Activated naive CD8-positive, alpha-beta T cell treated with anti-CD3 and anti-CD28 coated beads, Interleukin-2, amount 10 ng/mL, durations not matched to agents 7 days and 5 days (primary cell): ENCODE measurements at regions of chr6 and their contacts with region 1.

Region 1: DNA sequence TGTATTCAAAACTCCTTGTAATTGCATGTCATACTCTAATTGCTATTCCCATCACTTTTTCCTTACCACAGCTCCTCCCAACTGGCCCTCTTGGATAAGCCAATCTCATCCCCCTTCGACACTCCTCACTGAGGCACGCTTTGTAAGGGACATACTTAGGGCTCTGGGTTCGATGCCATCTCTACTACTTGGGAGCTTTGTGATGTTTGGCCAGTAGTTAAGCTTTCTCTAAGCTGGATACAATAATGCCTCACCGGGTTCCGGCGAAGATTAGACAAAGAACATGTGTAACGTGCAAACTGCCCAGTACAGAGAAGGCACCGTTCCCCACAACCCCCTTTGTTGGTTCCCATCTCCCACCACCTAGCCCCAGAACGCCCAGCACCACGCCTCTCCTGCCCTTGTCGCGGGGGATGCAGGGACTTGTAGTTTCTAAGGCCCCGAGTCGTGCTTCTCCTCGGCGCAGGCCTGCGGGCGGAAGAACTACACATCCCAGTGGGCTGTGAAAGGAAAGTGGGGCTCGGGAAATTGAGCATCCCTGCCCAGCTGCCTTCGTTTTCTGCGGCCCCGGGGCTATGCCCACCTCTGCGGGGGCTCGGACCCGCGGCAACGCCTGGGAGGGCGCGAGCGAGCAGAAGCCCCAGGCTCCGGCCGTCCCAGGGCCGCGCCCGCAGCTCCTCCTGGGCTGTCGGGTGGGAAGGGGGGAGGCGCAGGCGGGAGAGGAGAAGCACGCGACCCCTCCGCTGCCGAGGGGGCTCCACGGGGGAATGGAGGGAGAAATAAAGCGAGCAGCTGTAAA is 1.1 kb upstream of the ZDHHC14 start:
- DNase-seq: peak; percentile 83
- ATAC-seq: peak; percentile 70
- H3K4me3 Mint-ChIP-seq: peak overlapping the region; percentile 80
- H3K27ac Mint-ChIP-seq: peak overlapping the region; percentile 76
- H3K4me1 Mint-ChIP-seq: peaks cover 23% of the 10 kb centered on the region
- H3K27me3 Mint-ChIP-seq: peaks cover 8% of the 10 kb centered on the region

Region 2: DNA sequence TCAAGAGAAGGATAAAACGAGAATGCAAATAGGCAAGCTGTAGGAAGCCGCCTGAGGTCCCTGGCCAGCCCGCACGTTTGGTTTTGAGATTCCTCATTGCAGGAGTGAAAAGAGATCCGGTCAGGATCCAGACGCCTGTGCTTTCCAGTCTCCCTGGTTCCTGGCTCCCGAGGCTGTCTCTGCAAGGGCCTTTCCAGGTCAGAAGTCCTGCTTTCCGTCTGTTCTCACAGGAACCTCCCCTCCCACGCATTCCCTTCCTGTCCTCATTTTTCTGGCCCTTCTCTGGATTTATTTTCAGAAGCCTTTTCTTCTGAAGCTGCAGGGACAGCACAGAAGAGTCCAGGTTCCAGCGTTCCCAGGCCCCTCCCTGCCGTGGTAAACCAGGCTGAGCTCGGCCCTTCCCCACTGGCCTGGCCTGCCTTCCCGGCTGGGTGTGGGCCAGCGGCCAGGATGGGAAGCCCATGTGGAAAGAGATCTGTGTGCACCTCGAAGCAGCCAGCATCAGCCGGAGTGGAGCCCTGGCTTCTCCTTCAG is 110.5 kb before region 1 on chr6:
- POLR2A ChIA-PET with region 1: no interaction called
- DNase-seq: no peak
- ATAC-seq: no peak
- H3K4me3 Mint-ChIP-seq: no peak overlapping the region
- H3K27ac Mint-ChIP-seq: no peak overlapping the region
- H3K4me1 Mint-ChIP-seq: peaks cover 6% of the 10 kb centered on the region
- H3K27me3 Mint-ChIP-seq: peaks cover 2% of the 10 kb centered on the region

Region 3: DNA sequence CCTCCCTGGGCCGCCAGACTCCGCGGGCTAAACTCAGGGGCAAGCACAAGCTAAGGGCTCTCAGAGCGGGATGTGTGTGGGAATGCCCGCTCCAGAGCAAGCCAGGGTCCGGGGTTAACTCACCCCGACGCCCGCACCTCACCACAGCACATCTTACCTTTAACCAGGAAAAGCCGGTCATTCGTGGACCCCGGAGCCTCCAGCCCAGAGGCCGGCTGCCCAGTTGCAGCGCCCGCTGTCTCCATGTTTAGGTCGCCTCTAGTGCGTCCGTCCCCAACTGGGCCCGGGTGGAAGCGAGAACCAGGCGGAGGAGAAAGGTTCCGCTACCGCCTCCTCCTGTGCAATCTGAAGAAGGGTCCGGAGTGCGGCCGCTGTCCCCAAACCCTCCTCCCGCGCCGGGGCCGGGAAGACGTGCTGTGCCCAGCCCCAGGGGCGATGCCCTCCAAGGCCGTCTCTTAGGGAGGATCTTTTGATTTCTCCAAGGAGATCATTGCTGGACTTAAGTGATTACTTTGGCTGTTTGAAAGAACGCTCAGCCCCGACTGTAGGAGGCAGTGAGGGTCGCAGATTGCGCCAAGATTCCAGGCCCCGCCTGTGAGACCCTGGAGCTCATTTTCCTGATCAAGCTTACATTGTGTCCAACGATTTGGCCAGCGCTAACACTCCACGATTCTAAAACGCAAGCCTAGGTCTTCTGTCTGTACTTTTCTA is 56.4 kb before region 1 on chr6 and contains the start of gene TMEM242:
- POLR2A ChIA-PET with region 1: interaction called, 14 read pairs
- DNase-seq: peak; percentile 91
- ATAC-seq: peak; percentile 93
- H3K4me3 Mint-ChIP-seq: peak within 1 kb of the TSS; percentile 99
- H3K27ac Mint-ChIP-seq: peak within 1 kb of the TSS; percentile 90
- H3K4me1 Mint-ChIP-seq: peaks cover 15% of the 10 kb centered on the region
- H3K27me3 Mint-ChIP-seq: peaks cover 30% of the 10 kb centered on the region
- total RNA-seq, gene TMEM242: 9.2 to 10.1 TPM

Region 4: DNA sequence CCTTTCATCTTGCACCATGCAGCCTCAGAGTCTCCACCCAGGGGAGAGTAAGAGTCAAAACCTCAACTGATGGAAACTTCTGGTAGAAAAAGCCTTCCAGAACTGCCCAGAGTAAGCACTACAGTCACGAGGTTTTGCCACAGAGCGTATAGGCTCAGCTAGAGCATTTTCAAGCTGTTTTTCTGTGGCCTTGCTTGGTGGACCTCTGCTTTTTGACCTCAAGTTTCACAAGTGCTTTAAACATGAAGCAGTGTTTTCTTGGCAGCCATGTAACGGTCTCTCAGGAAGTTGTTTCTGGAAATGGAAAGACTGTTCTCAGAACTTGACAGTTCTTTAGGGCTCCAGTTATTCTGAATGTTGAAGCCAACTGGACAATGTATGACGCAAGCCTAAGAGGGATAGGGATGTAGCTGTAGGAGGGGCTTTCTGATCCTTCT is 147.6 kb after region 1 on chr6:
- POLR2A ChIA-PET with region 1: interaction called, 11 read pairs
- DNase-seq: no peak
- ATAC-seq: peak; percentile 97
- H3K4me3 Mint-ChIP-seq: peak overlapping the region; percentile 43
- H3K27ac Mint-ChIP-seq: peak overlapping the region; percentile 85
- H3K4me1 Mint-ChIP-seq: peaks cover 29% of the 10 kb centered on the region
- H3K27me3 Mint-ChIP-seq: no peaks in the 10 kb centered on the region